Endothelial cell of umbilical vein (primary cell): ENCODE measurements at regions of chr20 and their contacts with region 1.

Region 1: DNA sequence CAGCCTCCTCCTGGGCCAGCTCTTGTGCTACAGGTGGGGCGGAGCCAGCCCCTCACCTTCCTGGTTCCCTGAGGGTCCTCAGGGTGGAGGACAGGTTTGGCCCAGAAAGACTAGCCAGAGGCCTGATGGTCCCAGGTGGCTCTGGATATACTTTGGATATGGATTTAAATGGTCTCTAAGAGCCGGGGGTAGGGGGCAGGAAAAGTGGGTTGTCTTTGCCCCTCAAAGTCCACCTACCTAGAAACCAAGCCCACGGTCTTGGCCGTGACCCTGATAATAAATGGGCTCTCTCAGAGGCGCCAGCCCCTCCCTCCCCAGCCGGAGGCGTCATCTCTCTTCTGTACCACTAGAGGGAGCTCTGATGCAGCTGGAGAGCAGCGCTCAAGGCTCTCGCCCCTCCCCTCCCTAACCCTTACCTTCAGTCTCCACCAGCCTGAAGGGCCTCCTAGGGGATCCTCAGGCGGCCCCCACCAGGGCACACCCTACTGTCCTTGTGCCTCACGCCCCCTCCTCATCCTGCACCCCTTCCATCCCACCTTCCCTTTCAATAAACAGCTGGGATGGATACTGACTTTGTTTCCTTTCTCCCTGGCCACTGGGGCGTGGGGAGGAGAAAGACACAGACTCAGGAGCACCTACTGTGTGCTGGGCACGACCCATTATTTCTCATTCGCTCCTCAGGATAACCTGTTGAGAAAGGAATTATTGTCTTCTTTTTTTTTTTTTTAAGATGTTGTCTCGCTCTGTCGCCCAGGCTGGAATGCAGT is 7.6 kb downstream of the NRSN2 start:
- DNase-seq: peak; percentile 76
- H3K4me3 ChIP-seq: no peak overlapping the region
- H3K27ac ChIP-seq: no peak overlapping the region
- H3K4me1 ChIP-seq: no peaks in the 10 kb centered on the region
- H3K27me3 ChIP-seq: no peaks in the 10 kb centered on the region
- CTCF ChIP-seq: peak; percentile 89 to 94
- POLR2A ChIP-seq: no peak

Region 2: GRCh38 chr20:381581-382290 is 27.3 kb after region 1 on chr20:
- CTCF ChIA-PET with region 1: interaction called, 13 read pairs
- POLR2A ChIA-PET with region 1: interaction called, 7 read pairs
- dilution Hi-C with region 1: no loop called
- intact Hi-C with region 1: loop called (anchors 2 kb)
- DNase-seq: peak; percentile 48
- H3K4me3 ChIP-seq: peak overlapping the region; percentile 62 to 92 (median 88)
- H3K27ac ChIP-seq: no peak overlapping the region
- H3K4me1 ChIP-seq: peaks cover 6% of the 10 kb centered on the region
- H3K27me3 ChIP-seq: no peaks in the 10 kb centered on the region
- CTCF ChIP-seq: no peak
- POLR2A ChIP-seq: peak; percentile 36

Region 3: GRCh38 chr20:438571-439469 is 84.3 kb after region 1 on chr20:
- CTCF ChIA-PET with region 1: interaction called, 11 read pairs
- POLR2A ChIA-PET with region 1: no interaction called
- dilution Hi-C with region 1: no loop called
- intact Hi-C with region 1: no loop called
- DNase-seq: peak; percentile 55
- H3K4me3 ChIP-seq: no peak overlapping the region
- H3K27ac ChIP-seq: peak overlapping the region; percentile 4
- H3K4me1 ChIP-seq: peaks cover 16% of the 10 kb centered on the region
- H3K27me3 ChIP-seq: no peaks in the 10 kb centered on the region
- CTCF ChIP-seq: no peak
- POLR2A ChIP-seq: no peak

Region 4: DNA sequence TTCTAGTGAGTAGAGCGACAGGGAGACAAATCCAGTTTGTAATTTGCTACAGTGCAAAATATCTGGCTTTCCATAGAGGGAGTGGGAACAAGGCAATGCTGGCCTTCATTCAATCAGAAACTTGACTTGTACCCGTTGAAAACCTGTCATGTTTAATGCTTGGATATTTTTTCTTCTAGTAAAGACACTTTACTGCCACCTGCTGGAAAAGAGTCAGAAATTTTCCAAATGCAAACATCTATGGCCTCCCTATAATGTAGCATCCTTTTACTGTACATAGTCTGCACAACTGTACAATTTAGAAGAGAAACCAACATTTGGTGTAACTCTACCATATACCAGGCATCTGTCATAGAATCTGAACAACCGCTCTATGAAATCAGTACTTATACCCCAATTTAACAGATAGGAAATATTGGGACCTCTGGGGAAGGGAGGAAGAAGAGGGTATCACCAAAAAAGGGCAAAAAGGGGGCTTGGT is 124.5 kb after region 1 on chr20:
- CTCF ChIA-PET with region 1: interaction called, 29 read pairs
- POLR2A ChIA-PET with region 1: no interaction called
- dilution Hi-C with region 1: no loop called
- intact Hi-C with region 1: loop called (anchors 1 kb)
- DNase-seq: peak; percentile 70
- H3K4me3 ChIP-seq: no peak overlapping the region
- H3K27ac ChIP-seq: no peak overlapping the region
- H3K4me1 ChIP-seq: peaks cover 7% of the 10 kb centered on the region
- H3K27me3 ChIP-seq: no peaks in the 10 kb centered on the region
- CTCF ChIP-seq: peak; percentile 21 to 40
- POLR2A ChIP-seq: no peak

Region 5: DNA sequence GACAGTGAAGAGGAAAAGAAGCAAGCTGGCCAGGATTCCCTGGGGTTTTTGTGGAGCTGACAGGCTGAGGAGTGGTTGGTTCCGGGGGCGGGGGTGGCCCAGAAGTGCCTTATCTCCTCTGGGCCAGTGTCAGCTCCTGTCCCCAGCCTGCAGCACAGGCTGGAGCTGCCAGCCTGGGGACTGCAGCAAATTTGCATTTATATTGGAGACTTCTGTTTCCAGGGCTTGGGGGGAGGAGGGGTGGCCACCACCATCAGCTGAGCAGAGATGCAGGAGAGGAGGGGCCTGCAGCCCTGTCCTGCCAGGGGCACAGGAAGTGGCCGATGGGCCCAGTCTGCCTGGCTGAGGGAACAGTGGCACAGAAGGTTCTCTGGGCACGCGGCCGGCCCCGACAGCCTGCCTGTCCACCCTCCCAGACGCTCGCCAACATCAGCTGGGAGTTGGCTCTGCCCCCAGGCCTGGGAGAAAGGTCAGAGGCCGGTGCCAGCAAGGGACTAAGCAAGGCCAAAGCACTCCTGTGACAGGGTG is 345.4 kb after region 1 on chr20:
- CTCF ChIA-PET with region 1: no interaction called
- POLR2A ChIA-PET with region 1: no interaction called
- dilution Hi-C with region 1: no loop called
- intact Hi-C with region 1: no loop called
- DNase-seq: no peak
- H3K4me3 ChIP-seq: no peak overlapping the region
- H3K27ac ChIP-seq: no peak overlapping the region
- H3K4me1 ChIP-seq: no peaks in the 10 kb centered on the region
- H3K27me3 ChIP-seq: peaks cover 0 to 3% of the 10 kb centered on the region in 2 experiments
- CTCF ChIP-seq: no peak
- POLR2A ChIP-seq: no peak